Natural killer cell (primary cell): ENCODE measurements at regions of chr14 and their contacts with region 1.

Region 1: GRCh38 chr14:42391162-42391834 is 784.6 kb downstream of the LRFN5 start:
- DNase-seq: no peak
- ATAC-seq: no peak
- H3K4me3 ChIP-seq: no peak overlapping the region
- H3K4me3 Mint-ChIP-seq: no peak overlapping the region
- H3K27ac ChIP-seq: no peak overlapping the region
- H3K27ac Mint-ChIP-seq: no peak overlapping the region
- H3K4me1 ChIP-seq: no peaks in the 10 kb centered on the region
- H3K4me1 Mint-ChIP-seq: no peaks in the 10 kb centered on the region
- H3K27me3 ChIP-seq: no peaks in the 10 kb centered on the region
- H3K27me3 Mint-ChIP-seq: no peaks in the 10 kb centered on the region
- CTCF ChIP-seq: no peak

Region 2: DNA sequence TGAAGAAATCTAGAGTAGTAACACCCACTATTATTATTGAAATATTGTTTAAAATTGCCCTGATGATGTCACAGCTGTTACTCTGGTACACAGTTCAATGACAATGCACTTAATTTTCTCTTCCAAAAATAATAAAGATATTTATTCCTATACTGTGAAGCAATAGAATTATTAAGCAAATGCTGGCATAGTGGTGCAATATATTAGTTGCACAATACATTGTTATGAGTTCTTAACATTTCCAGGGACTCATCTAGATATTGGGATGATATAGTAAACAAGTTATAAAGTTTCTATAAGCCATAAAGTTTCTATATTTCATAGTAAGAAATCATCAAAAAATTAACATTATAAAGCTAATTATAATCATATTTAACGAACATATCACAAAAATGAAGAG is 113.1 kb after region 1 on chr14:
- intact Hi-C with region 1: loop called (anchors 10 kb)
- DNase-seq: no peak
- ATAC-seq: no peak
- H3K4me3 ChIP-seq: no peak overlapping the region
- H3K4me3 Mint-ChIP-seq: no peak overlapping the region
- H3K27ac ChIP-seq: no peak overlapping the region
- H3K27ac Mint-ChIP-seq: no peak overlapping the region
- H3K4me1 ChIP-seq: no peaks in the 10 kb centered on the region
- H3K4me1 Mint-ChIP-seq: no peaks in the 10 kb centered on the region
- H3K27me3 ChIP-seq: no peaks in the 10 kb centered on the region
- H3K27me3 Mint-ChIP-seq: no peaks in the 10 kb centered on the region
- CTCF ChIP-seq: no peak